Activated T-helper 1 cell treated with anti-CD3 and anti-CD28 coated beads, Interleukin-12 subunit alpha, Interleukin-12 subunit beta, Interleukin-2, Interleukin-4 antibody, amounts not matched to agents 30 ng/mL and 10 ng/mL and 1 ng/mL, durations not matched to agents 14 hours and 24 hours and 36 hours (primary cell): ENCODE measurements at regions of chr19 and their contacts with region 1.

Region 1: GRCh38 chr19:34677386-34678084 is at the start of gene ZNF302:
- DNase-seq: peak; percentile 91
- H3K4me3 Mint-ChIP-seq: peak within 1 kb of the TSS; percentile 94
- H3K27ac Mint-ChIP-seq: peak within 1 kb of the TSS; percentile 99
- H3K4me1 Mint-ChIP-seq: peaks cover 30% of the 10 kb centered on the region
- H3K27me3 Mint-ChIP-seq: peaks cover 4% of the 10 kb centered on the region
- total RNA-seq, gene ZNF302: 14.8 and 16.5 TPM in 2 replicates

Region 2: GRCh38 chr19:33963514-33963913 is 714.0 kb before region 1 on chr19:
- intact Hi-C with region 1: no loop called
- DNase-seq: no peak
- H3K4me3 Mint-ChIP-seq: no peak overlapping the region
- H3K27ac Mint-ChIP-seq: no peak overlapping the region
- H3K4me1 Mint-ChIP-seq: no peaks in the 10 kb centered on the region
- H3K27me3 Mint-ChIP-seq: peaks cover 1% of the 10 kb centered on the region

Region 3: DNA sequence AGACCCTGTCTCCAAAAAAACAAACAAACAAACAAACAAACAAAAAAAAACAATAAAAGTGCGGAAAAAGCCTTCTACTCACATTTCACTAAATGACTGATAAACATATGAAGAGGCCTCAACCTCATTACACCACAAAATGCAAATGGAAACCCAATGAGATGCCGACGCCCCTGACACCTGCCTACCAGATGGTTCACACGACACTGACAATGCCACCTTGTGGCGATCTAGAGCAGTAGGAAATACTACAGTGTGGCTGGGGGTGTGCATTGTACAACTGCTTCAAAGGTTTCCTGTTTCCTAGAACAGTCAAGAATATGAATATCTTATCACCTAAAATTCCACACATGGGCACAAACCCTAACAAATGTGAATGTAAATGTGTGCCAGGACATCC is 14.6 kb before region 1 on chr19:
- intact Hi-C with region 1: loop called (anchors 1 kb)
- DNase-seq: peak; percentile 31
- H3K4me3 Mint-ChIP-seq: no peak overlapping the region
- H3K27ac Mint-ChIP-seq: no peak overlapping the region
- H3K4me1 Mint-ChIP-seq: peaks cover 9% of the 10 kb centered on the region
- H3K27me3 Mint-ChIP-seq: no peaks in the 10 kb centered on the region

Region 4: GRCh38 chr19:34712395-34713261 is 35.1 kb after region 1 on chr19:
- intact Hi-C with region 1: loop called (anchors 5 kb)
- DNase-seq: peak; percentile 43
- H3K4me3 Mint-ChIP-seq: no peak overlapping the region
- H3K27ac Mint-ChIP-seq: no peak overlapping the region
- H3K4me1 Mint-ChIP-seq: peaks cover 5% of the 10 kb centered on the region
- H3K27me3 Mint-ChIP-seq: peaks cover 4% of the 10 kb centered on the region

Region 5: DNA sequence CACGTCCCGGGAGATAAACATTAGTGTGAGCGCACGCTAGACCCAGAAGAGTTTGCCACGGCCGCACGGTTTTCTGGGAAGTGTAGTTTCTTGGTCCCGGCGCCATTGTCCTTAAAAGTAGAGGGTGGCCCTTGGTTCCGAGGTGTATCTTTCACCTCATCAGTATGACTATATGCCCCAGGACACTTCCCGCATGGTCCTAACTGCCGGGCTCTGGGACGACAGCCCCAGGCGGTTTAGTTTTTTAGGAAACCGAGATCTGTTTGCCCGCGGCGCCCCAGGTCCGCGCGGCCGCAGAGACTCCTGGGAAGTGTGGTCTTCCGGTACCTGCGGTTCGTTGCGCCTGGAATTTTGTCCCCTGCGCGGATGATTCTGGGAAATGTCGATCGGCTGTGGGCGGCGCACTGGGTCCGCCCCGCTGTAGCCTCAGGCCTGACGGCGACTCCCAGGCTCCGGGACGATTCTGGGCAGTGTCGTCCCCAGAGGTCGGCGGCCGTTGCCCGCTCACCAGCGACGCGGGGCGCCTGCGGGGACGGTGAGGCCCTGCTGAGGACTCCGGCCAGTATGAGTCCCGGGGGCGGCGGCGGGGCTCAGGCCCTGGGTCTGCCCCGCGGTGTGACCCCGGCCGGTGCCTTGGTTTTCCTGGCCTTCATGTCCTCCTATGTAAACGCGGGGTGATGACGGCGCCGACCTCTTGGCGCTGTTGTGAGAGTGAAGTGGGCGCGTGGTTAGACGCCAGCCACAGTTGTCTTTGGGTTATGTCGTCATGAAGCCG is 56.5 kb after region 1 on chr19 and contains the start of gene ZNF181:
- intact Hi-C with region 1: loop called (anchors 1 kb)
- DNase-seq: peak; percentile 72
- H3K4me3 Mint-ChIP-seq: peak within 1 kb of the TSS; percentile 92
- H3K27ac Mint-ChIP-seq: peak within 1 kb of the TSS; percentile 95
- H3K4me1 Mint-ChIP-seq: peaks cover 24% of the 10 kb centered on the region
- H3K27me3 Mint-ChIP-seq: no peaks in the 10 kb centered on the region
- total RNA-seq, gene ZNF181: 3.1 and 4.3 TPM in 2 replicates

Region 6: DNA sequence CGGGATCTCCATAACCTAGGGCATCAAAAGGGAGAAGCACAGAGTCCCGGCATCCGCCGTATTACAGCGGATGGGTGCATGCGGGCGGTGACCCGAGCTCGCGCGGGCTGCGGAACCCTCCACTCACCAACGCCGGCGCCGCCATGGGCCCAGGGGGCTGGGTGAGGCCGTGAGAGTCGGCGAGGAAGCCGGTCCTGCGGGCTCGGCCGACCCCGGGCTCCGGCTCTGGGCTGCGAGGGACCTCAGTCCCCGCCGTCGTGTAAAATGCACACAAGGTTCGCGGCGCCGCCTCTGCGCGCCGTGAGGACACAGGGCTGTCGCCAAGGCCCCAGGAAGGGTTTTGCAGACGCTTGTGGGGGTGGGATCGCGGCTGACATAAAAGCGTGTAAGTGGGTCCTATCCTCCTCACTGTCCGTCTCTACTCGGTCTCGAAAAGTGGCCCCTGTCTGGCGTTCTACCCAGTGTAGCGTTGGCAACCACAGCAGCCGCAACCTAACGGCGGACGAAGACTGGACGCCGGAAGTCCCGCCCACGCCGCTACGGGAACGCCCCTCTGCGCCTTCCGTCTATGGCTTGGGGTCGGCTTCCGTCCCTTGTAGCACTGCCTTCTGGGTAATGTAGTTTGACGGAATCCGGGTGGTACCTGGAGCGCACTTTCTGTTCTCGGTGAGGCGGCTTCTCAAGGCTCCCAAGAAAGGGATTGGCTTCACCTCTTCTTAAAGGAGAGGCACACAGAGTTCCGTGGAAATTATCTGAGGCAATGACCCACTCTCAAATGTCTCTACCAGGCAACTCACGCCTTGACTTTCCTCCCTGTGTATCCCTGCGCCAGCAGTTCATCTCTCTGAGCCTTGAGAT is 95.4 kb after region 1 on chr19 and contains the start of gene ZNF599:
- intact Hi-C with region 1: loop called (anchors 1 kb)
- DNase-seq: peak; percentile 85
- H3K4me3 Mint-ChIP-seq: peak within 1 kb of the TSS; percentile 91
- H3K27ac Mint-ChIP-seq: peak within 1 kb of the TSS; percentile 95
- H3K4me1 Mint-ChIP-seq: peaks cover 23% of the 10 kb centered on the region
- H3K27me3 Mint-ChIP-seq: no peaks in the 10 kb centered on the region
- total RNA-seq, gene ZNF599: 2.3 and 2.6 TPM in 2 replicates